PC-3 (cell line): ENCODE measurements at regions of chr2 and their contacts with region 1.

Region 1: DNA sequence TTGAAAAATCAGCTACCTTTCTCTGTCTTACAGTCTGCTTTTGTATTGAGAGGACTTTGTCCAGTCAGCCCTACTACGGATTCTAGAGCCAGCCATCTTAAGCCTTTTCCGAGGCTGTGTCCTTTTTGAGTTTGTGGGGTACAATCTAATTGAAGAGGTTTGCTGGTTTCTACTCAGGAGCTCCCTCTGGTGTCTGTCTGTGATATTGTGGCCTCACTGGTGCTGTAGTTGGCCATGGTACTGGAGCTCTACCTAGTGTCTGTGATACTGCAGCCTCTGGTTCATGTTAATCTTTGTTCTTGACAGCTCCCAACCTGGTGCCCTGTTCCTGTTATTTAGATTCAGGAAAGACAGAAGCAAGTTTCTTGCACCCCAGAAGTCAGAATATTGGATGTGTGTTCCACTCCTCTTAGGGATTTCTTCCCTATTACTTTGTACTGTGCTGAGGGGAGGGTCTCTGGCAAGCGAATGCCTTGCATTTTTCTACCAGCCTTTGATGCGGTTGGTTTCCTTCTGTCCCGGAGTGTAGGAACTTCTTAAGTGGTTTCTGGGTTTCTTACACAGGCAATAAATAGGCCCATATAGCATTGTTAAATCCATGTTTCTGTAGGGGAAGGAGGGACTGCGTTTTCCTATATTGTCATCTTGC is 78.5 kb downstream of the ACSL3 start:
- DNase-seq: peak; percentile 81
- ATAC-seq: peak; percentile 78
- H3K4me3 ChIP-seq: no peak overlapping the region
- H3K27ac ChIP-seq: no peak overlapping the region
- H3K4me1 ChIP-seq: peaks cover 33% of the 10 kb centered on the region
- H3K27me3 ChIP-seq: no peaks in the 10 kb centered on the region
- CTCF ChIP-seq: peak; percentile 85

Region 2: GRCh38 chr2:222730366-222730999 is 208.8 kb before region 1 on chr2:
- CTCF ChIA-PET with region 1: no interaction called
- POLR2A ChIA-PET with region 1: no interaction called
- intact Hi-C with region 1: no loop called
- DNase-seq: no peak
- ATAC-seq: no peak
- H3K4me3 ChIP-seq: no peak overlapping the region
- H3K27ac ChIP-seq: no peak overlapping the region
- H3K4me1 ChIP-seq: no peaks in the 10 kb centered on the region
- H3K27me3 ChIP-seq: no peaks in the 10 kb centered on the region
- CTCF ChIP-seq: no peak

Region 3: GRCh38 chr2:222903234-222904220 is 35.8 kb before region 1 on chr2:
- CTCF ChIA-PET with region 1: no interaction called
- POLR2A ChIA-PET with region 1: no interaction called
- intact Hi-C with region 1: no loop called
- DNase-seq: peak; percentile 64
- ATAC-seq: peak; percentile 58
- H3K4me3 ChIP-seq: no peak overlapping the region
- H3K27ac ChIP-seq: no peak overlapping the region
- H3K4me1 ChIP-seq: peaks cover 30% of the 10 kb centered on the region
- H3K27me3 ChIP-seq: no peaks in the 10 kb centered on the region
- CTCF ChIP-seq: peak; percentile 78

Region 4: GRCh38 chr2:222915092-222915957 is 24.0 kb before region 1 on chr2:
- CTCF ChIA-PET with region 1: no interaction called
- POLR2A ChIA-PET with region 1: no interaction called
- intact Hi-C with region 1: loop called (anchors 1 kb)
- DNase-seq: peak; percentile 53
- ATAC-seq: peak; percentile 19; the same call in 1 of the 2 replicates
- H3K4me3 ChIP-seq: no peak overlapping the region
- H3K27ac ChIP-seq: no peak overlapping the region
- H3K4me1 ChIP-seq: peaks cover 22% of the 10 kb centered on the region
- H3K27me3 ChIP-seq: no peaks in the 10 kb centered on the region
- CTCF ChIP-seq: peak; percentile 79